ENCODE measurements at regions of chr7 and their contacts with region 1.

Region 1: GRCh38 chr7:117119192-117119924 is 166.1 kb downstream of the ST7 start:
- DNase-seq: peak; percentile 33
- ATAC-seq: peak; percentile 75
- H3K4me3 ChIP-seq: no peak overlapping the region
- H3K27ac ChIP-seq: no peak overlapping the region
- H3K4me1 ChIP-seq: peaks cover 3% of the 10 kb centered on the region
- H3K27me3 ChIP-seq: no peaks in the 10 kb centered on the region
- CTCF ChIP-seq: peak; percentile 75 to 87 (median 83)
- EP300 ChIP-seq: no peak
- POLR2A ChIP-seq: no peak
- RAD21 ChIP-seq: peak; percentile 97

Region 2: GRCh38 chr7:117008883-117009531 is 110.4 kb before region 1 on chr7:
- CTCF ChIA-PET with region 1: interaction called, 85 read pairs
- POLR2A ChIA-PET with region 1: interaction called, 3 read pairs
- RAD21 ChIA-PET with region 1: interaction called, 11 read pairs
- SMC1A ChIA-PET with region 1: interaction called, 158 read pairs
- in situ Hi-C with region 1: no loop called
- intact Hi-C with region 1: no loop called
- DNase-seq: no peak
- ATAC-seq: peak; percentile 9
- H3K4me3 ChIP-seq: 0 out of 2 replicates have a peak overlapping the region, but pooled peaks have one; percentile 9
- H3K27ac ChIP-seq: peak overlapping the region; percentile 100
- H3K4me1 ChIP-seq: peaks cover 46% of the 10 kb centered on the region
- H3K27me3 ChIP-seq: no peaks in the 10 kb centered on the region
- CTCF ChIP-seq: no peak
- EP300 ChIP-seq: peak in 1 of 2 experiments; percentile 50; a peak in 1 of 4 replicates
- POLR2A ChIP-seq: no peak
- RAD21 ChIP-seq: no peak

Region 3: GRCh38 chr7:117051808-117052207 is 67.5 kb before region 1 on chr7:
- CTCF ChIA-PET with region 1: no interaction called
- POLR2A ChIA-PET with region 1: no interaction called
- RAD21 ChIA-PET with region 1: no interaction called
- SMC1A ChIA-PET with region 1: interaction called, 3 read pairs
- in situ Hi-C with region 1: loop called (anchors 10 kb)
- intact Hi-C with region 1: no loop called
- DNase-seq: no peak
- ATAC-seq: no peak
- H3K4me3 ChIP-seq: no peak overlapping the region
- H3K27ac ChIP-seq: no peak overlapping the region
- H3K4me1 ChIP-seq: peaks cover 6% of the 10 kb centered on the region
- H3K27me3 ChIP-seq: no peaks in the 10 kb centered on the region
- CTCF ChIP-seq: no peak
- EP300 ChIP-seq: no peak
- POLR2A ChIP-seq: no peak
- RAD21 ChIP-seq: no peak

Region 4: GRCh38 chr7:117173035-117173770 is 53.8 kb after region 1 on chr7:
- CTCF ChIA-PET with region 1: no interaction called
- POLR2A ChIA-PET with region 1: no interaction called
- RAD21 ChIA-PET with region 1: no interaction called
- SMC1A ChIA-PET with region 1: no interaction called
- in situ Hi-C with region 1: no loop called
- intact Hi-C with region 1: no loop called
- DNase-seq: no peak
- ATAC-seq: no peak
- H3K4me3 ChIP-seq: no peak overlapping the region
- H3K27ac ChIP-seq: no peak overlapping the region
- H3K4me1 ChIP-seq: no peaks in the 10 kb centered on the region
- H3K27me3 ChIP-seq: no peaks in the 10 kb centered on the region
- CTCF ChIP-seq: no peak
- EP300 ChIP-seq: no peak
- POLR2A ChIP-seq: no peak
- RAD21 ChIP-seq: no peak

Region 5: GRCh38 chr7:117364339-117365080 is 245.2 kb after region 1 on chr7:
- CTCF ChIA-PET with region 1: no interaction called
- POLR2A ChIA-PET with region 1: no interaction called
- RAD21 ChIA-PET with region 1: no interaction called
- SMC1A ChIA-PET with region 1: no interaction called
- in situ Hi-C with region 1: no loop called
- intact Hi-C with region 1: no loop called
- DNase-seq: no peak
- ATAC-seq: peak; percentile 52
- H3K4me3 ChIP-seq: no peak overlapping the region
- H3K27ac ChIP-seq: no peak overlapping the region
- H3K4me1 ChIP-seq: no peaks in the 10 kb centered on the region
- H3K27me3 ChIP-seq: no peaks in the 10 kb centered on the region
- CTCF ChIP-seq: no peak
- EP300 ChIP-seq: no peak
- POLR2A ChIP-seq: no peak
- RAD21 ChIP-seq: no peak

Measured in GM12878 (cell line).